ENCODE measurements at regions of chr14 and their contacts with region 1.

Region 1: DNA sequence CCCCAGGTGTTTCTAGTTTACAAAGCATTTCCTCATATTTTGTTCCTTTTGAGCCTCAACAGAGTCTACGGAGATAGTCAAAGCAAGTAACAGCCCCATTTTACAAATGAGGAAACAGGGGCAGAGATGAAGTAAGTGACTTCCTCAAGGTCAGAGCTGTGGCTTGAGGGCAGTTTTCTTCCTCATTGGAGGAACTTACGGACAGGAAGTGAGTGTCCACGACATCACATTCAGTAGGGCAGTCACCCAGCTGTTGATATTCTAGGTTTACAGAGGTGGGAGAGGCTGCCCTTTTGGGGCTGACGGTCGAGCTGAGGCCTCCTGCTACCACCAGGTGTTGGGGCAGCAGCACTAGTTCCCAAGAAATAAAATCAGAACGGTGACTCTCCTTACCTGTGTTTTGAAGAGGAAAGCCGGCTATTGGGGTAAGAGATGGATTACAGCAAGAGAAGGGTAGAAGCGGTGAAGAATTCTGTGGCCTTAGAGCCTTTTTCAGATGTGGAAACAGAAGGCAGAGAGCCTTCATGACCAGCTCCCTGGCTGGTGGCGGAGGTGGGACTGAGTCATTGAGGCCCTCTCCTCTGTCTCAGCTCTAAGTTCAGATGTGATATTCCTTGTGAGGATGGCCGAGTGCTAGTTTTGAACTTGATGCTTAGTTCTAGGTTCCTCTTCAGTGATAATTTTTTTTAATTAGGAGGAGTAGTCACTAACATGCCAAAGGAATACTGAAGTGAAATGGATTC is 41.7 kb downstream of the SUSD6 start:
- DNase-seq: no peak
- ATAC-seq: peak; percentile 74
- H3K4me3 Mint-ChIP-seq: peak overlapping the region; percentile 61
- H3K27ac Mint-ChIP-seq: peak overlapping the region; percentile 88
- H3K4me1 Mint-ChIP-seq: peaks cover 95% of the 10 kb centered on the region
- H3K27me3 Mint-ChIP-seq: no peaks in the 10 kb centered on the region
- CTCF ChIP-seq: no peak

Region 2: GRCh38 chr14:69685716-69686115 is 32.6 kb after region 1 on chr14:
- CTCF ChIA-PET with region 1: no interaction called
- POLR2A ChIA-PET with region 1: interaction called, 4 read pairs
- intact Hi-C with region 1: loop called (anchors 5 kb)
- DNase-seq: no peak
- ATAC-seq: no peak
- H3K4me3 Mint-ChIP-seq: peak overlapping the region; percentile 6
- H3K27ac Mint-ChIP-seq: peak overlapping the region; percentile 81
- H3K4me1 Mint-ChIP-seq: peaks cover 80% of the 10 kb centered on the region
- H3K27me3 Mint-ChIP-seq: no peaks in the 10 kb centered on the region
- CTCF ChIP-seq: no peak